ENCODE measurements at regions of chr16 and their contacts with region 1.

Region 1: DNA sequence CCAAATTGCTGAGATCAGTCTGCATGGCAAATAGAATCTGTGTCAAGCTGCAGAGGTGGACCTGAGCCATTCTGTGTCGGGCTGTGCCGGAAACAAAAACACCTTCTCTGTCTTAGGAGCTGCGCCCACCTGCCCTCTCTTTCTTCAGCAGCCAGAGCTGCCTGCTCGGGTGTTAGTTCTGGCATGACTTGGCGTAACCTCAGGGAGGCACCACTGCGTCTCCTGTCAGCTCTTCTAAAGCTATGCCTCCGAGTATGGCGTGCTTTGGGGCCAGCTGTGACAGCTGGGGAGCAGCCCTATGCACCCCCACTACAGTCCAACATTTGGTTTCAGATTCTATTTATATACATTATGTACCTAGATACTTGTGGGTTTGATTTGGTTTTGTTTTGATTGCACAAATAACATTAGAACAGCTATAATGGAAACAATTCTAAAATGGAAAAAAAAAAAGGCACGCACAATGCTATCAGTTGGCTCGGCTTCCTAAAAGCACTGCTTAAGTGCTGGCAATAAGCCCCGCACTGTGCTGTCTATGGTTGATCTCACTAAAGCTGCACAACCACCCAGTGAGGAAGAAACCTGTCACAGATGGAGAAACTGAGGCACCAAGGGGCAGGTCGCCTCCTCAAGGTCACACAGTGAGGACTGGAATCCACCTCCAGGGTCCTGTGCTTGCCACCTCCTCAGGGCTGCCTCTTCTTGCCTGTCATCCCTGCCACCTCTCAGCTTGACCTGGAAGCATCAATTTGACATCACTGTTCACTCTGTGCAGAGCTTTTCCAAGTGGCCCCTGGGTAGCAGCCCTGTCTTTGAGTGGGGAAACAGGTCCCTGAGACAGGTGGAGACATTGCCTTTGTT is 18.7 kb upstream of the ADGRG1 start:
- DNase-seq: no peak
- ATAC-seq: peak in 1 of 2 experiments; percentile 21; a peak in 3 of 6 replicates
- H3K4me3 ChIP-seq: no peak overlapping the region
- H3K27ac ChIP-seq: peak overlapping the region; percentile 69 to 74
- H3K4me1 ChIP-seq: peaks cover 71% of the 10 kb centered on the region
- CTCF ChIP-seq: no peak
- EP300 ChIP-seq: no peak
- POLR2A ChIP-seq: no peak
- RAD21 ChIP-seq: peak in 1 of 2 experiments; percentile 10; a peak in 1 of 5 replicates

Region 2: DNA sequence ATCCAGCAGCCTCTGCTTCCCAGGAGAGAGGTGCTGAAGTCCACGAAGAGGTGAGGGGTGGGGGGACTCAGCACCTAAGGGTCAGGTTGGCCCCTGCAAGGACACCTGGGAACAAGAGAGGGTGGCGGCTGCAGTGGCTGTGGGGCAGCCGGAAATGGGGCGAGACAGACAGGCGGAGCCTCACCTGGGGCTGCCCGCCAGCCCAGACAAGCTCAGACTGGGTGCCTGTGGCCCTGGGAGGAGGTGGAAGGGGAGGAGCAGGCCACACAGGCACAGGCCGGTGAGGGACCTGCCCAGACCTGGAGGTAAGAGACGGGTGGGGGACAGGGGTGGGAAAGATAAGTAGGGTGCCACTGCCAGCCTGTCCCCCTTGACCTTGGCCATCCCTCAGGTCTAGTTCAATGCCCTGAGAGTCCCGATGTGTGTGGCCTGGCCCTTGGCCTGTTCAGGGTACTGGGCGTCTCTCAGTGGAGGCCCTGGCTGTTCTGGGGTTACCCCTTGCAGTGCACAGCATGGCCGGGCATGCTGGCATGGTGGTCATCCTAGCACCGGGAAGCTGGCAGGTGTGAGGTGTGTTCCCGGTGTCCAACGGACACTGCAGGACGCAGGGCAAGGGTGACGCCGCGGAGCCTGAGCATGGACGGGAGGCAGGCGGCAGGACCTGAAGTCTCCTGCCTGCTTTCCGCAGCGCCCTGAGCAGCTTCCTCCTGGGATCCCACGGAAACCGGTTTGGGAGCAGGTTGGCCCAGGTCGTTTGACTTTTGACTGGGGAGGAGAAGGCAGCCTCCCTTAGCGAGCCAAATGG is 10.3 kb after region 1 on chr16:
- CTCF ChIA-PET with region 1: interaction called, 17 read pairs
- POLR2A ChIA-PET with region 1: interaction called, 3 read pairs
- DNase-seq: no peak
- ATAC-seq: no peak
- H3K4me3 ChIP-seq: no peak overlapping the region
- H3K27ac ChIP-seq: peak overlapping the region; percentile 91 to 98
- H3K4me1 ChIP-seq: peaks cover 83% of the 10 kb centered on the region
- CTCF ChIP-seq: no peak
- EP300 ChIP-seq: no peak
- POLR2A ChIP-seq: no peak
- RAD21 ChIP-seq: no peak

Region 3: DNA sequence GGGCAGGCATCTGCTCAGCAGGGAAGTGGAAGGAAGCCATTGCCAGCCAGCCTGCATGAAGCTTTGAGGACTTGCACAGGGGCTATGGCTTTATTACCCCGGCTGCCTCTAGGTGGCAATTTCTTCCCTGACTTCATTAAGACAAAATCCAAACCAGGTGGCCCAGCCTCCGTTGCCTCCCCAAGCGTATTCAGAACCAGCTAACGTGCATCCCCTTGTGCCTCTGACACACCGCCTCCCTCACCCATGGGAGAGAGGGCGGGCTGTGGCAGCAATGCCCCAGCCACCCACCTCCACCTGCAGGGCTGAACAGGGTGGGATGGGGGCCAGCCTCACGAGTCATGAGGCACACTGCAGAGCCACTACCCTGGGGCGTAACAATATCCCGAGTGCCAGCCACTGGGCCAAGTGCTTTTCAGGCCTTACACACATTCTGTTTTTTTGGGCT is 185.7 kb after region 1 on chr16:
- CTCF ChIA-PET with region 1: no interaction called
- POLR2A ChIA-PET with region 1: no interaction called
- DNase-seq: peak; percentile 79 to 89
- ATAC-seq: peak; percentile 33 to 51; a peak in 5 of 6 replicates
- H3K4me3 ChIP-seq: peak overlapping the region; percentile 53
- H3K27ac ChIP-seq: peak overlapping the region; percentile 91 to 100
- H3K4me1 ChIP-seq: peaks cover 55% of the 10 kb centered on the region
- CTCF ChIP-seq: peak; percentile 51
- EP300 ChIP-seq: no peak
- POLR2A ChIP-seq: no peak
- RAD21 ChIP-seq: peak; percentile 57 to 62